ENCODE measurements at regions of chr11 and their contacts with region 1.

Region 1: DNA sequence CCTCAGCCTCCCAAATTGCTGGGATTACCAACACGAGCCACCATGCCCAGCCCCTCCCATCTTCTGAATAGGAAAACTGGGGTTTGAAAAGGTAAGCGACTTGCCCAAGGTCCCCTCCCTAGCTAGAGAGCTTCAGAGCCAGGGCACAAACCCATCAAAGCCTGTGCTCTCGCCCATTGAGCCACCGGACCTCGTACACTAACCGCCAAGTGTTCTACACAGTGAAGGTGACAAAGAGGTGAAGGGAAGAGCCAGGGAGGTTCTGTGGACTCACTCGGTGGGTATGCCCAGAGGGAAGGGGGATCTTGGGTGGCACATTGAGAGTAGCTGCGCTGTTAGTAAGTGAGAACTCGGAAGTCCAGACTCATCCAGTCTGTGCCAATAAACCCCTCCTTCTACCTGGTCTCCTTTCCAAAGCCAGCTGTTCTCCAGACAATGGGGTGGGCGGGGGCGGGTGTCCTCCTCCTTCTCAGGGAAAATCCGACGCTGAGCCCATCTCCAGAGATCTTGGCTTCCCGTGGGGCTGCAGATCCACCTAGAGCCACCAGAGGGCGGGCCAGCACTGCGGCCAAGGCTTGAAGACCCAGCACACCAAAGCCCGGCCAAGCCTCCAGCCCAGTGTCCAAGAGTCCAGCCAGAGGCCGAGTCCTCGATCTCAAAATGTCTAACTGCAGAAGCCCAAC is 3.2 kb upstream of the RTN4RL2 start:
- DNase-seq: no peak
- ATAC-seq: peak; percentile 82
- H3K4me3 ChIP-seq: no peak overlapping the region
- H3K27ac ChIP-seq: no peak overlapping the region
- H3K4me1 ChIP-seq: peaks cover 20% of the 10 kb centered on the region
- H3K27me3 ChIP-seq: peaks cover 5% of the 10 kb centered on the region in 2 experiments
- CTCF ChIP-seq: peak; percentile 94 to 100 (median 98); a peak in 5 of 6 replicates
- EP300 ChIP-seq: no peak
- POLR2A ChIP-seq: no peak
- RAD21 ChIP-seq: peak; percentile 90

Region 2: GRCh38 chr11:57353852-57354251 is 103.2 kb before region 1 on chr11:
- CTCF ChIA-PET with region 1: interaction called, 17 read pairs
- POLR2A ChIA-PET with region 1: interaction called, 4 read pairs
- RAD21 ChIA-PET with region 1: interaction called, 3 read pairs
- SMC1A ChIA-PET with region 1: no interaction called
- in situ Hi-C with region 1: no loop called
- intact Hi-C with region 1: no loop called
- DNase-seq: no peak
- ATAC-seq: no peak
- H3K4me3 ChIP-seq: no peak overlapping the region
- H3K27ac ChIP-seq: no peak overlapping the region
- H3K4me1 ChIP-seq: no peaks in the 10 kb centered on the region
- H3K27me3 ChIP-seq: no peaks in the 10 kb centered on the region; a peak in 1 of 4 replicates
- CTCF ChIP-seq: no peak
- EP300 ChIP-seq: no peak
- POLR2A ChIP-seq: no peak
- RAD21 ChIP-seq: no peak

Region 3: GRCh38 chr11:57444362-57445121 is 12.6 kb before region 1 on chr11:
- CTCF ChIA-PET with region 1: interaction called, 38 read pairs
- POLR2A ChIA-PET with region 1: no interaction called
- RAD21 ChIA-PET with region 1: interaction called, 7 read pairs
- SMC1A ChIA-PET with region 1: interaction called, 5 read pairs
- in situ Hi-C with region 1: no loop called
- intact Hi-C with region 1: no loop called
- DNase-seq: no peak
- ATAC-seq: no peak
- H3K4me3 ChIP-seq: no peak overlapping the region
- H3K27ac ChIP-seq: no peak overlapping the region
- H3K4me1 ChIP-seq: no peaks in the 10 kb centered on the region
- H3K27me3 ChIP-seq: no peaks in the 10 kb centered on the region
- CTCF ChIP-seq: no peak
- EP300 ChIP-seq: no peak
- POLR2A ChIP-seq: no peak
- RAD21 ChIP-seq: no peak

Region 4: GRCh38 chr11:57493507-57494503 is 36.7 kb after region 1 on chr11:
- CTCF ChIA-PET with region 1: interaction called, 60 read pairs
- POLR2A ChIA-PET with region 1: no interaction called
- RAD21 ChIA-PET with region 1: interaction called, 13 read pairs
- SMC1A ChIA-PET with region 1: interaction called, 19 read pairs
- in situ Hi-C with region 1: no loop called
- intact Hi-C with region 1: no loop called
- DNase-seq: no peak
- ATAC-seq: peak; percentile 94
- H3K4me3 ChIP-seq: no peak overlapping the region
- H3K27ac ChIP-seq: no peak overlapping the region
- H3K4me1 ChIP-seq: no peaks in the 10 kb centered on the region
- H3K27me3 ChIP-seq: no peaks in the 10 kb centered on the region
- CTCF ChIP-seq: peak; percentile 86 to 97 (median 91)
- EP300 ChIP-seq: no peak
- POLR2A ChIP-seq: no peak
- RAD21 ChIP-seq: peak; percentile 69

Region 5: GRCh38 chr11:57546869-57547475 is 89.9 kb after region 1 on chr11:
- CTCF ChIA-PET with region 1: interaction called, 11 read pairs
- POLR2A ChIA-PET with region 1: no interaction called
- RAD21 ChIA-PET with region 1: interaction called, 9 read pairs
- SMC1A ChIA-PET with region 1: no interaction called
- in situ Hi-C with region 1: no loop called
- intact Hi-C with region 1: no loop called
- DNase-seq: no peak
- ATAC-seq: peak; percentile 82
- H3K4me3 ChIP-seq: no peak overlapping the region
- H3K27ac ChIP-seq: peak overlapping the region; percentile 48
- H3K4me1 ChIP-seq: peaks cover 15% of the 10 kb centered on the region
- H3K27me3 ChIP-seq: no peaks in the 10 kb centered on the region
- CTCF ChIP-seq: no peak
- EP300 ChIP-seq: 0 out of 4 replicates have a peak, but pooled peaks of 1 of the 2 experiments have one; percentile 15
- POLR2A ChIP-seq: no peak
- RAD21 ChIP-seq: no peak

Measured in GM12878 (cell line).